ENCODE measurements at regions of chr10 and their contacts with region 1.

Region 1: DNA sequence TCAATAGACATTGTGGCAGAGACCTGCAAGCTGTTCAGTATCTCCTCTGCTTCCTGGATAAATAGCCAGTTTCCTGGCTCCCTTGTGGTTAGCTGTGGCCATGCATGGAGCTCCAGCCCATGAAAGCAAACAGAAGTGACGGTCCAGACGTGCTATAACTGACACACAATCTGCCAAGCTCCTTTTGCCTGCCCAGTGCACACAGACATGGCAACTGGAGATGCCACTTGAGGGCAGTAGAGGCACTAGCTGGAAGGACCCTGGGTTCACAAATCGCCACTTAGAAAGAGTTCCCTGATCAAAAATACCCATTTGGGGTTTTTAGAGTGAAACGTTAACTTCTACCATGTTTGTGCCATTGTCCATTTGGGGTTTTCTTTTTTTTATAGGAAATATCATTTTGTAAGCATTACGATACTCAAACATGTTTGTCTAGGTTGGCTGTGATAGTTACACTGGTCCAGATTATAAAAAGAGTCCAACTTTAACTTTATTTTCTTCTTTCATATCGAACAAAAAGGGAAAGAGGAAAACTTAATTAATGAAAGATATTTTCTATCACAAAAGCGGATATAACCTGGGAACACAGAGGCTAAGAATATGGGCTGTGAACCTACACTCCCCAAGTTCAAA is 31.3 kb downstream of the KIN start:
- DNase-seq: peak; percentile 39
- H3K4me3 Mint-ChIP-seq: no peak overlapping the region
- H3K27ac Mint-ChIP-seq: no peak overlapping the region
- H3K4me1 Mint-ChIP-seq: no peaks in the 10 kb centered on the region
- H3K27me3 Mint-ChIP-seq: no peaks in the 10 kb centered on the region

Region 2: DNA sequence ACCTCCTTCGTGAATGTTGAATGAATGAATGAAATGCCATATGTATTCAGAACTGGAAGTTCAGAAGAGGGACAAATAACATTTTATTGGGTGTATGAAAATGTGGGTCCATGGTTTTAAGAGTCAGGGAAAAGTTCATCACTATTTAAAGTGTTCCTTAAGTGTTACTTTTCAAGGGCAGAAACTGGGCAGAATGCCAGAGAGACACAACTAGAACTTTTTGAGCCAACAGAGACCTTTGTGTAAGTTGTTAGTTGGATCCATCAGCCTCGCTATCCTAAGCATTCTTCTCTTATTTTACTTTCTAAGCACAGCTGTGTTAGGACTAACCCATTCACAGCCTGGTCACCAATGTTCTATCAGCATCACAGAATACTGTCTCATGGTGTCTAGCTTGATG is 48.3 kb after region 1 on chr10:
- CTCF ChIA-PET with region 1: no interaction called
- intact Hi-C with region 1: no loop called
- DNase-seq: no peak
- H3K4me3 Mint-ChIP-seq: no peak overlapping the region
- H3K27ac Mint-ChIP-seq: no peak overlapping the region
- H3K4me1 Mint-ChIP-seq: no peaks in the 10 kb centered on the region
- H3K27me3 Mint-ChIP-seq: no peaks in the 10 kb centered on the region

Region 3: GRCh38 chr10:7818295-7819122 is 62.0 kb after region 1 on chr10 and contains the start of gene TAF3:
- CTCF ChIA-PET with region 1: no interaction called
- intact Hi-C with region 1: loop called (anchors 1 kb)
- DNase-seq: peak; percentile 95
- H3K4me3 Mint-ChIP-seq: peak within 1 kb of the TSS; percentile 94
- H3K27ac Mint-ChIP-seq: peak within 1 kb of the TSS; percentile 62
- H3K4me1 Mint-ChIP-seq: peaks cover 28% of the 10 kb centered on the region
- H3K27me3 Mint-ChIP-seq: no peaks in the 10 kb centered on the region
- total RNA-seq, gene TAF3: 12.6 to 12.8 TPM

Measured in activated naive CD4-positive, alpha-beta T cell treated with anti-CD3 and anti-CD28 coated beads for 36 hours (primary cell).